ENCODE measurements at regions of chr16 and their contacts with region 1.

Region 1: DNA sequence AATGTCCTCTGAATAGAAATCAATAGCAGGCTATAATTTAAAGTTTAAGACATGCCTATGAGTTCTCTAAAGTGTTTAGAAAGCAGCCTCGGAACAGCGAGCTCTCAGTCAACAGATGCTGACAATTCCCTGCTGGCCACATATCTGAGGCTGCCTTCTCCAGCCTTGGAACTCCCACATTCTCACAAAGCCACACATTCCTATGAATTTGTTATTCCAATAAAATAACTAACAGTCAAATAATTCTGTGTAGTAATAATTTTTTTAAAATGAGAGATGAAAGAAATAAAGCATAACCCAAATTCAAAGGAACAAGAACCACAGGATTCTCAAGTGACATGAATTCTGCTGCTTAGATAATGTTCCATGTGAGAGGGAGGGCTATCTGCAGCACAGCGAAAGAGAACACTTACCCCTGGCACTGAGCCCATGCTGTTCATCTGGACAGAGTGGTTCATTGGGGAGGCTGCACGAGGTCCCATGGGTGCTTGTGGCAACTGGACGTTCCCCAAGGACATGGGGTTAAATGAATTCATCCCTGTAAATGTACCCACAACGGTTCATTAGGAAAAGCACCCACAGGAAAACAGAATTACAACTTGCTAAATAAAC is 56.9 kb upstream of the TRAP1 start:
- DNase-seq: peak in 6 of 10 donors; percentile 44 to 67 (median 58)
- H3K4me3 ChIP-seq: peak overlapping the region in 1 of 59 donors; percentile 3
- H3K27ac ChIP-seq: peak overlapping the region in 50 of 59 donors; percentile 7 to 73 (median 50)
- H3K27me3 ChIP-seq: no peaks in the 10 kb centered on the region
- CTCF ChIP-seq: no peak

Region 2: GRCh38 chr16:3717235-3718018 is 56.8 kb before region 1 on chr16 and contains the start of gene TRAP1:
- intact Hi-C with region 1: loop called in 1 of 2 experiments (anchors 5 kb)
- DNase-seq: peak; percentile 84 to 96 (median 90)
- H3K4me3 ChIP-seq: peak within 1 kb of the TSS; percentile 60 to 100 (median 95)
- H3K27ac ChIP-seq: peak within 1 kb of the TSS in 54 of 59 donors; percentile 42 to 93 (median 82)
- H3K27me3 ChIP-seq: no peaks in the 10 kb centered on the region
- CTCF ChIP-seq: peak in 24 of 56 donors; percentile 9 to 60 (median 20)
- total RNA-seq, gene TRAP1: 87.9 to 163 (median 123) TPM

Region 3: DNA sequence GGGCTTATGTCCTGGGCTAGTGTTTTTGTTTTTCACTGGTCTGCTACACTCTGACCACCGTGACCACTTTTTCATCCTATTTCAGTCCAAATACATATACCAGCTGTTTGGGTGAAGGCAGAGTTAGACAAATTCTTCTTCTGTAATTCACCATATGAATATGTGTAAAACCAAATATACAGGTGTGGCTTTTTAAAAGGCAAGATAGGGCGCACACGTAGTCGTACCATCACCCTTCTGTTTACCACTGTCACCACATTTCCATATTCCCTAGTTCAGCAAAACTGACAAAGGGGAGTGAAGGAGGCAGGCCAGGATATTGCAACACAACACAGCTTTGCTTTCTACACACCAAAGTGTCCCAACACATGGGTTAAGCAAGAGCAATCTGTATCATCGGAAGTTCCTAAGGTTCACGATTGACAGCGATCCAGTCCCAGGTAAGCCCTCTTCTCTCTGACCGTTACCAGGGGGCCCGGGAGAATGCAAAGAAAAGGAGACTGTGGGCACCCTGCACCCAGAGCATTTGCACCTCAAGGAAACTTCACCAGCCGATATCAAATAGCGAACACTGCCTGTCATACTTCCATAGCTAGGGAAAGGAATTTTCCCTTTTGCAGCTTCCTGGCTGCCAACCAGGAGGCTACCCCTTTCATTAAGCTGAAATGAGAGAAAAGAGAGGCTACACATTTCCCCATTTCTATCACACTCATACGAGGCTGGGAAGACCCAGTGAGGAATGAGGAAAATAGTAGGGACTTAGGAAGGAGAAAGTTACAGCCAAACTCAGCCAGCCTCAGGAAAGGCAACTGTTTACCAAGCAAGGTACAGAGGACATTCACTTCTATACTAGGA is 83.2 kb after region 1 on chr16:
- intact Hi-C with region 1: loop called (anchors 5 to 10 kb)
- DNase-seq: no peak
- H3K4me3 ChIP-seq: peak overlapping the region in 8 of 59 donors; percentile 0 to 20 (median 15)
- H3K27ac ChIP-seq: peak overlapping the region in 46 of 59 donors; percentile 1 to 68 (median 35)
- H3K27me3 ChIP-seq: no peaks in the 10 kb centered on the region
- CTCF ChIP-seq: no peak

Region 4: GRCh38 chr16:4090351-4090851 is 316.1 kb after region 1 on chr16:
- intact Hi-C with region 1: loop called in 1 of 2 experiments (anchors 10 kb)
- DNase-seq: peak in 1 of 10 donors; percentile 49
- H3K4me3 ChIP-seq: peak overlapping the region in 17 of 59 donors; percentile 3 to 50 (median 21)
- H3K27ac ChIP-seq: peak overlapping the region in 10 of 59 donors; percentile 1 to 61 (median 22)
- H3K27me3 ChIP-seq: no peaks in the 10 kb centered on the region
- CTCF ChIP-seq: no peak

Region 5: GRCh38 chr16:4442371-4442770 is 668.1 kb after region 1 on chr16:
- intact Hi-C with region 1: no loop called
- DNase-seq: no peak
- H3K4me3 ChIP-seq: no peak overlapping the region
- H3K27ac ChIP-seq: no peak overlapping the region
- H3K27me3 ChIP-seq: no peaks in the 10 kb centered on the region
- CTCF ChIP-seq: no peak